ENCODE measurements at regions of chr5 and their contacts with region 1.

Region 1: GRCh38 chr5:96868603-96869371 is 7.5 kb upstream of the ERAP2 start:
- DNase-seq: peak in 4 of 9 experiments; percentile 24 to 79 (median 50)
- ATAC-seq: peak; percentile 99
- H3K4me3 ChIP-seq: no peak overlapping the region
- H3K4me3 Mint-ChIP-seq: no peak overlapping the region
- H3K27ac ChIP-seq: no peak overlapping the region
- H3K27ac Mint-ChIP-seq: no peak overlapping the region
- H3K4me1 ChIP-seq: peaks cover 28% of the 10 kb centered on the region
- H3K4me1 Mint-ChIP-seq: peaks cover 41% of the 10 kb centered on the region
- H3K27me3 ChIP-seq: no peaks in the 10 kb centered on the region
- H3K27me3 Mint-ChIP-seq: no peaks in the 10 kb centered on the region
- CTCF ChIP-seq: peak; percentile 96

Region 2: GRCh38 chr5:95961617-95962474 is 906.9 kb before region 1 on chr5 and contains the start of gene ELL2:
- CTCF ChIA-PET with region 1: no interaction called
- POLR2A ChIA-PET with region 1: no interaction called
- intact Hi-C with region 1: loop called in 1 of 2 experiments (anchors 5 kb)
- DNase-seq: peak; percentile 88 to 99 (median 96)
- ATAC-seq: peak; percentile 89
- H3K4me3 ChIP-seq: peak within 1 kb of the TSS; percentile 64 to 82
- H3K4me3 Mint-ChIP-seq: peak within 1 kb of the TSS; percentile 96
- H3K27ac ChIP-seq: peak within 1 kb of the TSS; percentile 73 to 87
- H3K27ac Mint-ChIP-seq: peak within 1 kb of the TSS; percentile 99
- H3K4me1 ChIP-seq: peaks cover 12% of the 10 kb centered on the region
- H3K4me1 Mint-ChIP-seq: peaks cover 36% of the 10 kb centered on the region
- H3K27me3 ChIP-seq: no peaks in the 10 kb centered on the region
- H3K27me3 Mint-ChIP-seq: no peaks in the 10 kb centered on the region
- CTCF ChIP-seq: no peak
- total RNA-seq, gene ELL2: 189 to 200 TPM

Region 3: DNA sequence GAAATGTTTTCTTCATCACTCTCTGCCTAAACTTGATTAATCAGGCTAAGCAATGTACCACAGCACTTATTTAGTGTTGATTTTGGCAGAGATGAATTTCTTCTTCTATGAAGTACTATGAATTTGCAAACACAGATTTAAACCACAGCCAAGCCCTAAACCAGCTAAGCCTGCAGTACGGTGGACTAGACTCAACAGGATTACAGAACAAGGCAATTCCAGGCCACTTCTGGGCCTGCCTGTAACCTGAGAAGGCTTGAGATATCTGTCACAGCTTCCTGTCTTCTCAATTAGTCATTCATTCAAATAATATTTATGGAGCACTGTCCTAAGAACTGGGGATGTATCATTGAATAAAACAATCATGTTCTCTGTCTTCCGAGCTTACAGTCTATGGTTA is 239.0 kb before region 1 on chr5:
- CTCF ChIA-PET with region 1: no interaction called
- POLR2A ChIA-PET with region 1: no interaction called
- intact Hi-C with region 1: no loop called
- DNase-seq: no peak
- ATAC-seq: no peak
- H3K4me3 ChIP-seq: no peak overlapping the region
- H3K4me3 Mint-ChIP-seq: no peak overlapping the region
- H3K27ac ChIP-seq: no peak overlapping the region
- H3K27ac Mint-ChIP-seq: no peak overlapping the region
- H3K4me1 ChIP-seq: no peaks in the 10 kb centered on the region
- H3K4me1 Mint-ChIP-seq: peaks cover 5% of the 10 kb centered on the region
- H3K27me3 ChIP-seq: no peaks in the 10 kb centered on the region
- H3K27me3 Mint-ChIP-seq: peaks cover 8% of the 10 kb centered on the region
- CTCF ChIP-seq: no peak

Region 4: DNA sequence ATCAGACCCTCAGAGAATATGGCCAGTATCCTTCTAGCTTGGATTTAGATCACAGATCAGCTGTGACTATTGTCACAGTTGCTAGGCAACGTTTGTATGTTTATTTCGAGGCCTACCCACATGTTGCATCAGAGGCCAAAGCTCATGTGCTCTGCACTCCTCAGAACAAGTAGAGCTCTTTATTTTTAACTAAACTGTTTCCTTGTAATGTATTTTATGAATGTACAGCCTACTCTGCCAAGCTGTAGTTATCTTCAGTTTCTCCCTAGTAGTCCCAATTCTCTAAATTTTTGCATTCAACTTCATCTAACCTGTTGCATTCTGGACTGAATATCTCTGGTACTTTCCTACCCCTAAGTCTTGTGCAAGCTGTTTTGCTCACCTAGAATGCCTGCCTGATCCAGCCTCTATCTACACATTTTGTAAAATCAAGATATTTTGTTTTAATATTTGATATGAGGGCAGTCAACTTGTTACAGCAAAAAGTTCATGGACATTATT is 153.8 kb before region 1 on chr5:
- CTCF ChIA-PET with region 1: no interaction called
- POLR2A ChIA-PET with region 1: no interaction called
- intact Hi-C with region 1: no loop called
- DNase-seq: peak in 8 of 9 experiments; percentile 3 to 84 (median 46)
- ATAC-seq: peak; percentile 69
- H3K4me3 ChIP-seq: no peak overlapping the region
- H3K4me3 Mint-ChIP-seq: no peak overlapping the region
- H3K27ac ChIP-seq: peak overlapping the region; percentile 23 to 60
- H3K27ac Mint-ChIP-seq: peak overlapping the region; percentile 80
- H3K4me1 ChIP-seq: peaks cover 16% of the 10 kb centered on the region
- H3K4me1 Mint-ChIP-seq: peaks cover 51% of the 10 kb centered on the region
- H3K27me3 ChIP-seq: no peaks in the 10 kb centered on the region
- H3K27me3 Mint-ChIP-seq: no peaks in the 10 kb centered on the region
- CTCF ChIP-seq: no peak

Region 5: GRCh38 chr5:96807075-96807654 is 61.6 kb before region 1 on chr5:
- CTCF ChIA-PET with region 1: interaction called, 7 read pairs
- POLR2A ChIA-PET with region 1: interaction called, 6 read pairs
- intact Hi-C with region 1: loop called in 1 of 2 experiments (anchors 5 kb)
- DNase-seq: peak in 2 of 9 experiments; percentile 9 to 32
- ATAC-seq: no peak
- H3K4me3 ChIP-seq: peak overlapping the region; percentile 71 to 85
- H3K4me3 Mint-ChIP-seq: peak overlapping the region; percentile 95
- H3K27ac ChIP-seq: peak overlapping the region; percentile 93 to 96
- H3K27ac Mint-ChIP-seq: peak overlapping the region; percentile 98
- H3K4me1 ChIP-seq: peaks cover 70% of the 10 kb centered on the region
- H3K4me1 Mint-ChIP-seq: peaks cover 82% of the 10 kb centered on the region
- H3K27me3 ChIP-seq: no peaks in the 10 kb centered on the region
- H3K27me3 Mint-ChIP-seq: no peaks in the 10 kb centered on the region
- CTCF ChIP-seq: no peak

Region 6: GRCh38 chr5:96885518-96886338 is 16.9 kb after region 1 on chr5:
- CTCF ChIA-PET with region 1: interaction called, 43 read pairs
- POLR2A ChIA-PET with region 1: interaction called, 4 read pairs
- intact Hi-C with region 1: loop called in 1 of 2 experiments (anchors 2 kb)
- DNase-seq: peak in 4 of 9 experiments; percentile 37 to 80 (median 48)
- ATAC-seq: peak; percentile 85
- H3K4me3 ChIP-seq: peak overlapping the region in 1 of 2 experiments; percentile 23
- H3K4me3 Mint-ChIP-seq: peak overlapping the region; percentile 71
- H3K27ac ChIP-seq: peak overlapping the region; percentile 51 to 68
- H3K27ac Mint-ChIP-seq: peak overlapping the region; percentile 93
- H3K4me1 ChIP-seq: peaks cover 58% of the 10 kb centered on the region
- H3K4me1 Mint-ChIP-seq: peaks cover 69% of the 10 kb centered on the region
- H3K27me3 ChIP-seq: no peaks in the 10 kb centered on the region
- H3K27me3 Mint-ChIP-seq: no peaks in the 10 kb centered on the region
- CTCF ChIP-seq: no peak

Region 7: GRCh38 chr5:96924016-96924443 is 55.2 kb after region 1 on chr5:
- CTCF ChIA-PET with region 1: interaction called, 12 read pairs
- POLR2A ChIA-PET with region 1: interaction called, 3 read pairs
- intact Hi-C with region 1: no loop called
- DNase-seq: peak in 7 of 9 experiments; percentile 13 to 73 (median 49)
- ATAC-seq: peak; percentile 94
- H3K4me3 ChIP-seq: no peak overlapping the region
- H3K4me3 Mint-ChIP-seq: peak overlapping the region; percentile 23
- H3K27ac ChIP-seq: peak overlapping the region in 1 of 2 experiments; percentile 51
- H3K27ac Mint-ChIP-seq: peak overlapping the region; percentile 92
- H3K4me1 ChIP-seq: peaks cover 38% of the 10 kb centered on the region
- H3K4me1 Mint-ChIP-seq: peaks cover 63% of the 10 kb centered on the region
- H3K27me3 ChIP-seq: no peaks in the 10 kb centered on the region
- H3K27me3 Mint-ChIP-seq: no peaks in the 10 kb centered on the region
- CTCF ChIP-seq: no peak

Region 8: DNA sequence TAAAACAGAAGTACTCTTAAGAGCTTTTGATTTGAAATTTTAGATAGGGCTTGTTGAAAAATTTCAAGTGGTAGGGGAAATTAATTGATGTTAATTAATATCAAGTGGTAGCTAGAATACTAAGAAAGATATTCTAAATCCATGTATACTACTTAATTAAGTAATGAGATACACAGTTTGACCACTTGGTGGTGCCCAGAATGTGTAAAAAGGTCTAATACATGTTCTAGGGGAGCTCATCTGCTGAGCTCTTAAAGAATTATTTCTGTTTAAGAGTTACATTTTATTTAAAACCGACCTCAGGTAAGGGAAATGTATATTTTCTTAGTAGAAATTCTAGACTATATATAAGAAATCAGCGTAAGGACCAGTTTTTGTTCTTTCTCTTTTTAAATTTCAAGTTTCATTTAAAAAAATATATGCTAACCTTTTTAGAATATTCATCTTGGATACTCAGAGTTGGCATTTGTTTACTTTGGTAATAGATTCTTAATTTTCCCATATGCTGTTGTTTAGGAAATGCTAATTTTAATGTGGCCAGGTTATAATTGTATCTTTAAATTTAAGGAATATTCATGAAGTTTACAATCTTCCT is 128.6 kb after region 1 on chr5:
- CTCF ChIA-PET with region 1: interaction called, 16 read pairs
- POLR2A ChIA-PET with region 1: interaction called, 3 read pairs
- intact Hi-C with region 1: loop called in 1 of 2 experiments (anchors 5 kb)
- DNase-seq: peak in 4 of 9 experiments; percentile 19 to 62 (median 35)
- ATAC-seq: peak; percentile 77
- H3K4me3 ChIP-seq: no peak overlapping the region
- H3K4me3 Mint-ChIP-seq: no peak overlapping the region
- H3K27ac ChIP-seq: no peak overlapping the region
- H3K27ac Mint-ChIP-seq: peak overlapping the region; percentile 17
- H3K4me1 ChIP-seq: no peaks in the 10 kb centered on the region
- H3K4me1 Mint-ChIP-seq: peaks cover 42% of the 10 kb centered on the region
- H3K27me3 ChIP-seq: no peaks in the 10 kb centered on the region
- H3K27me3 Mint-ChIP-seq: no peaks in the 10 kb centered on the region
- CTCF ChIP-seq: peak; percentile 73

Region 9: DNA sequence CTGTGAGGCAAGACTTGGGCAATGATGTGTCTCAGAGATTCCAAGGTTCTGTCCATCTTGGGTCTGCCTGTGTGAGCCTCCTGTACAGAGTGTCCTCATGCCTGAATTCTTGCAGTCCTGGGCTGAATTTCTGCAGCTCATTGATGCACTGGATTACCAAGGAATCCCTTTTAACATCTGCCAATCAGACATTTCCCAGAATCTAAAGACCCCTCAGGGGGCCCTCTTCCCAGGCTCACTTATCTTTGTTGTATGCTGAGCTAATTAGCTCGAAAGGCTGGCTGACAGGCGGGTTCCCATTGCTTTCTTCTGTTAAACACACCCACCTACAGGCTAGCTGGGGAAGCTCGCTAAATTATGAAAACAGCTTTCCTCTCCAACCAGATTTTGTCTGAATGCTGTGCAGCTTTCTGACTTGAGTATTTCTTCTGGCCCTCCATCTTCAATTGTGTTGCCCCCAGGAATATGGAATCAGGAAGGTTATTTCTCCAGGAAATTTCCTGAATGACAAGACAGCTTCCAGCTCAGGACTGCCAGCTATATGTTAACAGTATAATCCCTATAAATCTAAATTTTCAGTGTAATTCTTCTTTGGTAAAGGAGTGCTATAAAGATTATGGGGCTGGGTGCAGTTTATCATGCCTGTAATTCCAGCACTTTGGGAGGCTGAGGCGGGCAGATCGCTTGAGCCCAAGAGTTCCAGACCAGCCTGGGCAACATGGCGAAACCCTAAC is 273.9 kb after region 1 on chr5 and contains the start of gene LIX1:
- CTCF ChIA-PET with region 1: interaction called, 22 read pairs
- POLR2A ChIA-PET with region 1: interaction called, 3 read pairs
- intact Hi-C with region 1: loop called (anchors 1 to 5 kb)
- DNase-seq: peak in 5 of 9 experiments; percentile 3 to 52 (median 32)
- ATAC-seq: peak; percentile 58
- H3K4me3 ChIP-seq: no peak within 1 kb of the TSS
- H3K4me3 Mint-ChIP-seq: no peak within 1 kb of the TSS
- H3K27ac ChIP-seq: no peak within 1 kb of the TSS
- H3K27ac Mint-ChIP-seq: no peak within 1 kb of the TSS
- H3K4me1 ChIP-seq: no peaks in the 10 kb centered on the region
- H3K4me1 Mint-ChIP-seq: no peaks in the 10 kb centered on the region
- H3K27me3 ChIP-seq: peaks cover 0 to 3% of the 10 kb centered on the region in 2 experiments
- H3K27me3 Mint-ChIP-seq: peaks cover 15% of the 10 kb centered on the region
- CTCF ChIP-seq: peak; percentile 29
- total RNA-seq, gene LIX1: not detected

Region 10: GRCh38 chr5:97400537-97400936 is 531.8 kb after region 1 on chr5:
- CTCF ChIA-PET with region 1: no interaction called
- POLR2A ChIA-PET with region 1: no interaction called
- intact Hi-C with region 1: no loop called
- DNase-seq: no peak
- ATAC-seq: no peak
- H3K4me3 ChIP-seq: no peak overlapping the region
- H3K4me3 Mint-ChIP-seq: no peak overlapping the region
- H3K27ac ChIP-seq: no peak overlapping the region
- H3K27ac Mint-ChIP-seq: no peak overlapping the region
- H3K4me1 ChIP-seq: no peaks in the 10 kb centered on the region
- H3K4me1 Mint-ChIP-seq: no peaks in the 10 kb centered on the region
- H3K27me3 ChIP-seq: no peaks in the 10 kb centered on the region
- H3K27me3 Mint-ChIP-seq: no peaks in the 10 kb centered on the region
- CTCF ChIP-seq: no peak